Heart right ventricle (tissue), 16 donors: ENCODE measurements at regions of chr12 and their contacts with region 1.

Region 1: DNA sequence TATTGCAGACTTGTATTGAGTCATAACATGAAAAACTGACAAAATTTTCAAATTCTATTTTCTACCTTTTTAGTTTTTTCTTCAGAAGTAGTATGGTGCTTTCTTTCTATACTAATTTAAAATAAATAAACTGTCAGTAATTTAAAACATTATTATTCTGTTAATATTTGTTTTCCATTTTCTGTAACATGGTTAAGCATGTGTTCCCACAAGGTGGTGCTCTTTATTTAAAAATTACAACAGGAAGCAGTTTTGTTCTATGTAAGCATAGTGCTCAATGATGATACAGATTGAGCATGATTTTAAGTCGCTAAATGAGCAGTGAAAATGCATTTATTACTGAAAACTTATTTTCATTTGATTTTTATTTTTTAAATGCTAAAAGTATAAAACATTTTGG is 114.6 kb downstream of the PPFIA2 start:
- DNase-seq: no peak
- ATAC-seq: no peak
- H3K4me3 ChIP-seq: no peak overlapping the region
- H3K27ac ChIP-seq: no peak overlapping the region
- H3K4me1 ChIP-seq: no peaks in the 10 kb centered on the region
- H3K27me3 ChIP-seq: no peaks in the 10 kb centered on the region
- CTCF ChIP-seq: peak in 8 of 9 donors; percentile 14 to 71 (median 59)

Region 2: GRCh38 chr12:81683881-81684280 is 39.4 kb after region 1 on chr12:
- intact Hi-C with region 1: no loop called
- DNase-seq: no peak
- ATAC-seq: no peak
- H3K4me3 ChIP-seq: no peak overlapping the region
- H3K27ac ChIP-seq: no peak overlapping the region
- H3K4me1 ChIP-seq: no peaks in the 10 kb centered on the region
- H3K27me3 ChIP-seq: no peaks in the 10 kb centered on the region
- CTCF ChIP-seq: no peak

Region 3: GRCh38 chr12:81797100-81797499 is 152.6 kb after region 1 on chr12:
- intact Hi-C with region 1: loop called in 2 of 10 experiments (anchors 10 kb)
- DNase-seq: no peak
- ATAC-seq: no peak
- H3K4me3 ChIP-seq: no peak overlapping the region
- H3K27ac ChIP-seq: no peak overlapping the region
- H3K4me1 ChIP-seq: no peaks in the 10 kb centered on the region
- H3K27me3 ChIP-seq: peaks cover 0 to 5% (median 0%) of the 10 kb centered on the region in 7 donors
- CTCF ChIP-seq: peak in 2 of 9 donors; percentile 21 to 44

Region 4: DNA sequence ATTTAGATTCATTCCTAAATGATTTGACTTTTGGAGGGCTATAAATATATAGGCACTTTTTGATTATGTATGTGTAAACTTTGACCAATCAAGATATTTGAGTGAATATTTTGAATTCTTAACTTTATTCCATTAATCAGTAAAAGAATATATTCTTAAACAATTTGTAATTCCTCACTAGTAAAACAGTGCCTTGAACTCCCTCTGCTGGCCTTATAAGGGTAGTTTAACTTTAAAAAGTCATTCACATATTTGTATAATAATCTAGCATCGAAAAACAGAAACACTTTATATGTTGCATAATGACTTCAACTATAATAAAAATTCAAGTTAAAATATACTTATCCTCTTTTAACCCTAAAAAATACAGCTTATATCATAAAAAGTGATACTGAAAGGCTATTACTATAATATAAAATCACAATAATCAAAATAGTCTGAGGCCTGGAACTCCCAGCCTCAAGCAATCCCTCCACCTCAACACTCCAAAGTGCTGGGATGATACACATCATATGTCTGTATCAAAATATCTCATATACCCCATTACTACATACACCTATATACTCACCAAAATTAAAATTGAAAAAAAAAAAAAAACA is 682.5 kb after region 1 on chr12:
- intact Hi-C with region 1: loop called in 9 of 10 experiments (anchors 2 to 10 kb)
- DNase-seq: no peak
- ATAC-seq: no peak
- H3K4me3 ChIP-seq: no peak overlapping the region
- H3K27ac ChIP-seq: no peak overlapping the region
- H3K4me1 ChIP-seq: no peaks in the 10 kb centered on the region
- H3K27me3 ChIP-seq: no peaks in the 10 kb centered on the region
- CTCF ChIP-seq: peak; percentile 16 to 67 (median 53)